A549 (cell line): ENCODE measurements at regions of chr17 and their contacts with region 1.

Region 1: GRCh38 chr17:27760069-27760885 is 40.1 kb downstream of the NOS2 start:
- DNase-seq: peak; percentile 45 to 58
- ATAC-seq: peak; percentile 44 to 82; a peak in 5 of 6 replicates
- H3K4me3 ChIP-seq: no peak overlapping the region
- H3K27ac ChIP-seq: no peak overlapping the region
- H3K4me1 ChIP-seq: no peaks in the 10 kb centered on the region
- CTCF ChIP-seq: peak; percentile 97
- EP300 ChIP-seq: no peak
- POLR2A ChIP-seq: no peak
- RAD21 ChIP-seq: peak; percentile 75 to 80

Region 2: DNA sequence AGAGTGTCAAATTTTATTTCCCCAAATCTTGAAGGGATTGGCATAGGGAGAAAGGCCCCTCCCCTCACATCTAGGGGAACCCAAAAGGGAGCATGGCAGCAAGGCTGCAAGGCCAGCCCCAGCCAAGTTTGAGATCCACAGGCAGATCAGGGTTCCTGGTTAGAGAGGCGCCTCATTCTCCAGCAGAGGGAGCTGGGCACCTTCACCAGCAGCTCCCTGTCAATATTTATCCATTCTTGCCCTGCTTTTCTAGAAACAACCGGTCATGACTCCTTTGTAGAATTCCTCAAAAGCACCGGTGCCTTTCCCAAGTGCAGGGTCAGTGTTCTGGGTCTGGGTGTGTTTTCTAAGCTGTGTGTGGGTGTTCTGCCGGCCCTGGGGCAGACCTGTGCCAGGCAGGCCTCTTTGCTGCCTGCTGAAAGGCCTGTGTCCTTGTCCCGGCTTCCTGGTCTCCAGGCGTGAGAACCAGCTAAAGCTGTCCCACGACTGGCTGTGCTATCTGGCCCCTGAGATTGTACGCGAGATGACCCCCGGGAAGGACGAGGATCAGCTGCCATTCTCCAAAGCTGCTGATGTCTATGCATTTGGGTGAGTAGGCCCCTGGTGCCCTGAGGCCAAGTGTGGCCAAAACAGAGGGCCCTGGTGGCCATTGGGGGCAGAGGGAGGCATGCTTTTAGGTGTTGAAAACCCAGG is 150.5 kb before region 1 on chr17:
- CTCF ChIA-PET with region 1: interaction called, 35 read pairs
- POLR2A ChIA-PET with region 1: no interaction called
- DNase-seq: peak; percentile 46 to 53
- ATAC-seq: peak; percentile 82 to 88
- H3K4me3 ChIP-seq: no peak overlapping the region
- H3K27ac ChIP-seq: no peak overlapping the region
- H3K4me1 ChIP-seq: peaks cover 10% of the 10 kb centered on the region
- CTCF ChIP-seq: peak; percentile 44
- EP300 ChIP-seq: no peak
- POLR2A ChIP-seq: no peak
- RAD21 ChIP-seq: peak; percentile 46 to 70

Region 3: DNA sequence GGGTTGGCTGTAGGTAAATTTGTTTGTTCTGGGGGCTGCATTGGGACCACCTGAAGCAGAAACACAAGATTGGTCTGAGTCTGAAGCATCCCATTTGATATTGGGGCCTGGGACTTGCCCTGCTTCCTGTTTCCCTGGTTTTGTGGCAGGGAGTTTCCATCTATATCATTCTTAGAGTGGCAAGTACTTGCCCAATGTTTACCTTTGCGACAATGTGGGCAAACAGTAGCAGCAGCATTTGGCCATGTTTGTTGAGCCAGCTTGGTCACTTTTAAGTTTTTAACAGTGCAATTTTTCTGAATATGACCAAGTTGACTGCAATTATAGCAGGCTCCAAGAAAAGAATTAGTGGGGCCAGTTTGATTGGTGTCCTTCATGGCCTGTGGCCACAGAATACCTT is 67.5 kb before region 1 on chr17:
- CTCF ChIA-PET with region 1: interaction called, 12 read pairs
- POLR2A ChIA-PET with region 1: no interaction called
- DNase-seq: no peak
- ATAC-seq: no peak
- H3K4me3 ChIP-seq: no peak overlapping the region
- H3K27ac ChIP-seq: no peak overlapping the region
- H3K4me1 ChIP-seq: peaks cover 7% of the 10 kb centered on the region; the same call in 1 of the 3 replicates
- CTCF ChIP-seq: no peak
- EP300 ChIP-seq: no peak
- POLR2A ChIP-seq: no peak
- RAD21 ChIP-seq: no peak

Region 4: GRCh38 chr17:27747462-27748359 is 12.6 kb before region 1 on chr17:
- CTCF ChIA-PET with region 1: interaction called, 30 read pairs
- POLR2A ChIA-PET with region 1: no interaction called
- DNase-seq: peak in 1 of 2 experiments; percentile 22
- ATAC-seq: peak in 1 of 2 experiments; percentile 54; a peak in 2 of 6 replicates
- H3K4me3 ChIP-seq: no peak overlapping the region
- H3K27ac ChIP-seq: no peak overlapping the region
- H3K4me1 ChIP-seq: no peaks in the 10 kb centered on the region
- CTCF ChIP-seq: no peak; the same call in 2 of the 3 replicates
- EP300 ChIP-seq: no peak
- POLR2A ChIP-seq: no peak
- RAD21 ChIP-seq: no peak

Region 5: GRCh38 chr17:27805520-27806146 is 45.4 kb after region 1 on chr17:
- CTCF ChIA-PET with region 1: interaction called, 17 read pairs
- POLR2A ChIA-PET with region 1: no interaction called
- DNase-seq: peak; percentile 92 to 93
- ATAC-seq: peak; percentile 95 to 99
- H3K4me3 ChIP-seq: peak overlapping the region; percentile 28
- H3K27ac ChIP-seq: peak overlapping the region; percentile 73 to 86
- H3K4me1 ChIP-seq: peaks cover 3% of the 10 kb centered on the region; the same call in 1 of the 3 replicates
- CTCF ChIP-seq: peak; percentile 86
- EP300 ChIP-seq: no peak
- POLR2A ChIP-seq: no peak
- RAD21 ChIP-seq: peak; percentile 80 to 84

Region 6: GRCh38 chr17:27862004-27862403 is 101.7 kb after region 1 on chr17:
- CTCF ChIA-PET with region 1: interaction called, 12 read pairs
- POLR2A ChIA-PET with region 1: no interaction called
- DNase-seq: peak in 1 of 2 experiments; percentile 19
- ATAC-seq: peak in 1 of 2 experiments; percentile 57; a peak in 1 of 6 replicates
- H3K4me3 ChIP-seq: no peak overlapping the region
- H3K27ac ChIP-seq: no peak overlapping the region
- H3K4me1 ChIP-seq: no peaks in the 10 kb centered on the region
- CTCF ChIP-seq: no peak
- EP300 ChIP-seq: no peak
- POLR2A ChIP-seq: no peak
- RAD21 ChIP-seq: no peak

Region 7: GRCh38 chr17:27937026-27937546 is 176.8 kb after region 1 on chr17:
- CTCF ChIA-PET with region 1: no interaction called
- POLR2A ChIA-PET with region 1: no interaction called
- DNase-seq: no peak
- ATAC-seq: no peak
- H3K4me3 ChIP-seq: no peak overlapping the region
- H3K27ac ChIP-seq: no peak overlapping the region
- H3K4me1 ChIP-seq: no peaks in the 10 kb centered on the region
- CTCF ChIP-seq: no peak
- EP300 ChIP-seq: no peak
- POLR2A ChIP-seq: no peak
- RAD21 ChIP-seq: no peak